ENCODE measurements at regions of chrX and their contacts with region 1.

Region 1: DNA sequence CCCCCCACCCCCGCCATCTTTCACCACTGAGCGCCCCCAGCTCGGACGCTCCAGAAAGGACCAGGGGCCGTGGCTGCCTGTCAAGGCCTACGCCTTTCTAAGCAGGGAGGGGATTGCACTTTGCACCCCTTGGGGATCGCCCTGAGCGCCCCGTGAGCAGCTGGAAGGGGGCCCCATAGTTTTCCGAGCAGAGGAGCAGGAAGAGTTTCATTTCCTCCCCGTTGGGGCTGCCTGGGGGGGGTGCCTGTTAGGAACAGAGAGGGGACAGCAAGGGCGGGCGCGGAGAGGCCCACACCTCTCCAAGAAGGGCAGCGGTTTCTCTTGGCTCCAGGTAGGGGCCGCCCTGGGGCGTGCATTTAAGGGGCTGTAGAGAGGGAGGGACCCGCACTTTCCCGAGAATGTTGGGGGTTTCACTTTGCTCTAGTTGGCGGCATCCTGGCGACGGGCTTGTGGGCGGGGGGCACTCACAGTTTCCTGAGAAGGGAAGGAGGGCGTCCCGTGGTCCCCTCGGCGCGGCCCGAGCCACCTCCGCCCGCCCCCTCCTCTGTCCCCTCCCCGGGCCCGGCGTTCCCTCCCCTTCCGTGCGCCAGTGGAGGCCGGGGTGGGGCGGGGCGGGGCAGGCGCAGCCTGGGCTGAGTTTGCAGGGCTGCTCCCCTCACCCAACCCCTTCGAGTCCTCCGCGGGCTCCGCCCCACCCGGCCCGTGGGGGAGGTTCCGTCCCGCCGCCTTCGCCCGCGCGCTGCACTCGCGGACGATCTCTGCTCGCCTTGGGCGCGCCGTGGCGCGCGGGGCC is 82.3 kb upstream of the CD99 start:
- DNase-seq: peak; percentile 40 to 91
- H3K4me3 ChIP-seq: peak overlapping the region; percentile 77 to 94
- H3K27ac ChIP-seq: peak overlapping the region; percentile 67 to 70
- H3K4me1 ChIP-seq: peaks cover 0 to 8% of the 10 kb centered on the region in 2 donors
- H3K27me3 ChIP-seq: no peaks in the 10 kb centered on the region
- CTCF ChIP-seq: no peak

Region 2: GRCh38 chrX:1453951-1454785 is 1154.7 kb before region 1 on chrX:
- intact Hi-C with region 1: loop called (anchors 5 kb)
- DNase-seq: peak; percentile 46 to 91
- H3K4me3 ChIP-seq: peak overlapping the region; percentile 89
- H3K27ac ChIP-seq: peak overlapping the region; percentile 37 to 95
- H3K4me1 ChIP-seq: peaks cover 12 to 13% of the 10 kb centered on the region in 2 donors
- H3K27me3 ChIP-seq: no peaks in the 10 kb centered on the region
- CTCF ChIP-seq: peak; percentile 93 to 98 (median 98)

Region 3: GRCh38 chrX:2325076-2325784 is 283.6 kb before region 1 on chrX:
- intact Hi-C with region 1: loop called (anchors 10 kb)
- DNase-seq: peak; percentile 46 to 90
- H3K4me3 ChIP-seq: peak overlapping the region; percentile 61 to 67
- H3K27ac ChIP-seq: peak overlapping the region; percentile 71 to 78
- H3K4me1 ChIP-seq: no peaks in the 10 kb centered on the region
- H3K27me3 ChIP-seq: no peaks in the 10 kb centered on the region
- CTCF ChIP-seq: no peak

Region 4: DNA sequence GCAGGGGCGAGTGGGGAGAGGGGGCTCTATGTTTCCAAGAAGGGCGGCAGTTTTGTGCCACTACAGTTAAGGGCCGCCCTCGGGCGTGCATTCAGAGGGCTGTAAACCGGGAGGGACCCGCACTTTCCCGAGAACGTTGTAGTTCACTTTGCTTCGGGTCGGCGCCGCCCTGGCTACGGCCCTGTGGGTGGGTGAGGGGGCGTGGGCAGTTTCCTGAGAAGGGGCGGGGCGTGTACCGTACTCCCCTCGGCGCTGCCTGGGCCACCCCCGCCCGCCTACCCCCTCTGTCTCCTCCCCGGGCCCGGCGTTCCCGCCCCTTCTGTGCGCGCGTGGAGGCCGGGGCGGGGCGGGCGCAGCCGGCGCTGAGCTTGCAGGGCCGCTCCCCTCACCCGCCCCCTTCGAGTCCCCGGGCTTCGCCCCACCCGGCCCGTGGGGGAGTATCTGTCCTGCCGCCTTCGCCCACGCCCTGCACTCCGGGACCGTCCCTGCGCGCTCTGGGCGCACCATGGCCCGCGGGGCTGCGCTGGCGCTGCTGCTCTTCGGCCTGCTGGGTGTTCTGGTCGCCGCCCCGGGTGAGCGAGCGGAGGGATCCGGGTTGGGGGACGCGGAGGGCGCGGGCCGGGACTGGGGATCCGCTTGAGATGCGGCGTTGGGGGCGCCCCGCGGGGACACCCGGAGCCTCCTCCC is 82.2 kb after region 1 on chrX and contains the start of gene CD99:
- intact Hi-C with region 1: loop called (anchors 2 kb)
- DNase-seq: peak; percentile 39 to 96
- H3K4me3 ChIP-seq: peak within 1 kb of the TSS; percentile 86 to 94
- H3K27ac ChIP-seq: peak within 1 kb of the TSS; percentile 76 to 79
- H3K4me1 ChIP-seq: peaks cover 0 to 22% of the 10 kb centered on the region in 2 donors
- H3K27me3 ChIP-seq: no peaks in the 10 kb centered on the region
- CTCF ChIP-seq: no peak
- total RNA-seq, gene CD99: 262 TPM

Region 5: DNA sequence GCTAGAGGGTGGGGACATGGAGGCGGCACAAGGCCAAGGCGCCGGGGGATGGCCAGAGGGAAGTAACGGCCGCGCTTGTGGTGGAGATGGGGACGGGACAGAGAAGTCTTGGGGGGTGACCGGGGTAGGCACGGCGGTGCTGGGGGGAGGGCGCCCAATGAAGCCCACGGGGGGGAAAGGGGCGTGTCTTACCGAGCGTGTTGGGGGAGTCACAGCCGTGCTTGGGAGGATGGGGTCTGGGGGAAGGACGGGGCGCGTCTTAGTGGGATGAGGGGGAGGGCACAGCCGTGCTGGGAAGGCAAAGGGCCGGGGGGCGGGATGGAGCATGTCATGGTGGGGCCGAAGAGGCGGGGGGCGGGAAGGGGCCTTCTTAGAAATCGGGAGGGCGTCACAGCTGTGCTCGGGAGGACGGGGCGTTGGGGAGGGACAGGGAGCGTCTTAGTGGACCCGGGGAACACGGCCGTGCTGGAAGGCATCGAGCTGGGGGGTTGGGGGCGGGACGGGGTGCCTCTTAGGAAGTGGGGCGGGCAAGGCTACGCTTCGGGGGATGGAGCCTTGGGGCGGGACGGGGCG is 319.4 kb after region 1 on chrX:
- intact Hi-C with region 1: loop called (anchors 2 kb)
- DNase-seq: peak in 1 of 2 donors; percentile 24
- H3K4me3 ChIP-seq: peak overlapping the region; percentile 83 to 92
- H3K27ac ChIP-seq: peak overlapping the region; percentile 97 to 99
- H3K4me1 ChIP-seq: no peaks in the 10 kb centered on the region
- H3K27me3 ChIP-seq: no peaks in the 10 kb centered on the region
- CTCF ChIP-seq: no peak

Region 6: GRCh38 chrX:3244955-3245354 is 636.1 kb after region 1 on chrX:
- intact Hi-C with region 1: no loop called
- DNase-seq: no peak
- H3K4me3 ChIP-seq: no peak overlapping the region
- H3K27ac ChIP-seq: no peak overlapping the region
- H3K4me1 ChIP-seq: no peaks in the 10 kb centered on the region
- H3K27me3 ChIP-seq: no peaks in the 10 kb centered on the region
- CTCF ChIP-seq: peak in 2 of 3 experiments; percentile 10 to 31